ENCODE measurements at regions of chr7 and their contacts with region 1.

Region 1: DNA sequence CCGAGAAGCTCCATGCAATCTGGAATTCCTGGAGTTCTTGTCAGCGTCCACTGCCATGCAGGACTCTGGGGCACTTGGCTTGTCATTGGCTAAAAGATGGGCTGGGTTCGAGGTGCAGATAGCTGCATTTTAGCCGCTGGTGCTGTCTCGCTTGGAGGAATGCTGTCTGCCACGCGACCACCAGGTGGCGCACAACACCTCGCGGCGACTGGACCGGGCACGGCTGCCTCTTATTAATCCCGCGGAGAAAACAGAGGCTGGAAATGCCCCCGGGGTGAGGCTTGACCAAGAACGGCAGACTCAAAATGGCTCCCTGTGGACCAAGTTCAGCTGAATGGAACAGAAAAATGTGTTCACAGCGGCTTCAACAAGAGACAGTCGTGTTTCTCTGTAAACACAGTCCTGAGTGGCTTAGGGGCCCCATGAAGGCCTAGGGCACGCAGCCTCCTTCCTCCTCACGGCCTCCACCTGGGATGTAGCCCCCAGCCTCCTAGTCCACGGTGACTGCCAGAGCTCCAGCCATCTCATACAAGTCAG is 46.2 kb downstream of the AOC1 start:
- DNase-seq: peak; percentile 89
- H3K4me3 Mint-ChIP-seq: peak overlapping the region; percentile 22
- H3K27ac Mint-ChIP-seq: no peak overlapping the region
- H3K4me1 Mint-ChIP-seq: peaks cover 66% of the 10 kb centered on the region
- H3K27me3 Mint-ChIP-seq: peaks cover 29% of the 10 kb centered on the region
- CTCF ChIP-seq: peak; percentile 94

Region 2: GRCh38 chr7:150947738-150948651 is 49.5 kb after region 1 on chr7:
- CTCF ChIA-PET with region 1: interaction called, 4 read pairs
- intact Hi-C with region 1: loop called (anchors 1 kb)
- DNase-seq: no peak
- H3K4me3 Mint-ChIP-seq: no peak overlapping the region
- H3K27ac Mint-ChIP-seq: no peak overlapping the region
- H3K4me1 Mint-ChIP-seq: no peaks in the 10 kb centered on the region
- H3K27me3 Mint-ChIP-seq: peaks cover 81% of the 10 kb centered on the region
- CTCF ChIP-seq: no peak

Region 3: DNA sequence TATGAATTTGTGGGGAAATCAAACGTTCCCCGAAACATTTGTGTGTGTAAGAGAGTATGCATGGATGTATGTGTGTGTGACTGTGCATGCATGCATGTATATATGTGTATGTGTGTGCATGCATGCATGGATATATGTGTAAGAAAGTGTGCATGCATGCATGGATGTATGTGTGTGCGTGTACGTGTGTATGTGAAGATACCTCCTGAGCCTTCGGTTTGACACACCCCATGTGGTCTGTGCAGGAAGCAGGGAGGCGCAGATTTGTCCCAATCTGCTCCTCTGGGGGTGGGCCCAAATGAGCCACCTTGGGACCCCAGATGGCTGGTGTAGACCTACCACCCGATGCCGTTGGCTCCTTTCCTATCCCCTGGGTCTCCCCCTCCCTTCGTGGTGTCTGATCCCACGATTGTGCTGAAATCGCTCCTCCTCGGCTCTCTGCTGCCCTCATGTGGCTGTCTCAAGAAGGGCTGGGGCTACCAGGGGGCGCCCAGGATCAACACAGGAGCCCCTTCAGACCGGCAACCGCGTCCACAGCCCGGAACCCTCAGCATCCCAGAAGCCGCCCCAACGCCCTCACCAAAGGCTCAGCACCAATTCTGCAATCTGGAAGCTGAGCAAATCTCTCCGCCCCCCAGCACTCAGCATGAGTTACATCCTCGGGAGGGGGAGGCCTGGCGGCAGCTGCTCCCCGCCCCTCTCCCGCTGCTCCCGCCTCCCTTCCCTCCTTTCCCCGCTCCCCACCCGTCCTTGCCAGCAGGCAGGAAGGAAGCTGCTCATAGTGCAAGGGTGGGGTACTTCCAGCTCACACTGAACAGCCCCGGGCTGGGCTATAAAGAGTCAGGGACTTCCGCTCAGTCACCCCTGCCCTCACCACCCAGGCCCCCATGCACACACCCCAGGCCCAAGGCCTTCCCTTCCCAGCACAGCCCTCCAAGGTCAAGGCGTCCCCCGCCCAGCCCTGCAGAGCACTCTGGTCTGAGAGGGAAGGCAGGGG is 90.0 kb after region 1 on chr7:
- CTCF ChIA-PET with region 1: interaction called, 4 read pairs
- intact Hi-C with region 1: loop called (anchors 5 kb)
- DNase-seq: no peak
- H3K4me3 Mint-ChIP-seq: no peak overlapping the region
- H3K27ac Mint-ChIP-seq: no peak overlapping the region
- H3K4me1 Mint-ChIP-seq: peaks cover 25% of the 10 kb centered on the region
- H3K27me3 Mint-ChIP-seq: peaks cover 44% of the 10 kb centered on the region
- CTCF ChIP-seq: peak; percentile 62